IMR-90 (cell line): ENCODE measurements at regions of chr3 and their contacts with region 1.

Region 1: GRCh38 chr3:49035281-49035680 is 6.1 kb upstream of the IMPDH2 start:
- DNase-seq: no peak
- ATAC-seq: no peak
- H3K4me3 ChIP-seq: no peak overlapping the region
- H3K27ac ChIP-seq: no peak overlapping the region
- H3K4me1 ChIP-seq: peaks cover 4% of the 10 kb centered on the region
- H3K27me3 ChIP-seq: no peaks in the 10 kb centered on the region
- CTCF ChIP-seq: no peak
- POLR2A ChIP-seq: no peak
- RAD21 ChIP-seq: no peak

Region 2: GRCh38 chr3:49076646-49077045 is 41.4 kb after region 1 on chr3:
- CTCF ChIA-PET with region 1: no interaction called
- POLR2A ChIA-PET with region 1: no interaction called
- dilution Hi-C with region 1: no loop called
- in situ Hi-C with region 1: no loop called
- intact Hi-C with region 1: loop called (anchors 5 kb)
- DNase-seq: no peak
- ATAC-seq: no peak
- H3K4me3 ChIP-seq: no peak overlapping the region
- H3K27ac ChIP-seq: no peak overlapping the region
- H3K4me1 ChIP-seq: no peaks in the 10 kb centered on the region
- H3K27me3 ChIP-seq: no peaks in the 10 kb centered on the region
- CTCF ChIP-seq: no peak
- POLR2A ChIP-seq: no peak
- RAD21 ChIP-seq: no peak